Heart right ventricle (tissue), 16 donors: ENCODE measurements at regions of chr2 and their contacts with region 1.

Region 1: DNA sequence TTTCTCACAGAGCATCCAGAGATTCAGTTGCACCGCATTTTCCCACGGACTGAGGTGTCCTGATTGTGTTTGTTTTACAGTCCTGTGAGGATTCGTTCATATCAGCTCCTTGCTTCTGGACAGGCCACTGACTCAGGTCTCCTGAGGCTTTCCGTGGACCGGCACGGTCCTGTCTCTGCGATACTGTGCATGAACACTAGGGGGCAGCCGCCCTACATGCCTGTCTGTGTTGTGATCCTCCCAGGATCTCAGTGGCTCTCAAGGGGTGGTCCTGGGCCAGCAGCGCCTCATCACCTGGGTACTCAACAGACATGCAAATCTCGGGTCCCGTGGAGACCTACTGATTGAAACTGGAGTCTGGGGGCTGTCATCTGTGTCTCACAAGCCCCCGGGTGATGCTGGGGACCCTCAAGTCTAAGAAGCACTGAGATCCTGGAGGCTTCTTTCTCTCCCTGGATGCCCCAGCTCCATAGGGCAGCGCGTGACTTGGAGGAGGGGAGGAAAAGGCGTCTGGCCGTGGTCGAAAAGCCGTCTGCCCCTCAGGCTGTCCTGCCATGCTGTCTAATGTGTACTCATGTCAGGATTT is 28.9 kb downstream of the IL1R2 start:
- DNase-seq: peak; percentile 89 to 92
- ATAC-seq: peak; percentile 91 to 97 (median 95)
- H3K4me3 ChIP-seq: no peak overlapping the region
- H3K27ac ChIP-seq: peak overlapping the region in 4 of 10 donors; percentile 53 to 79 (median 62)
- H3K4me1 ChIP-seq: peaks cover 0 to 42% (median 20%) of the 10 kb centered on the region in 9 donors
- H3K27me3 ChIP-seq: no peaks in the 10 kb centered on the region
- CTCF ChIP-seq: peak; percentile 98 to 100 (median 99)

Region 2: GRCh38 chr2:102050854-102051391 is 30.2 kb after region 1 on chr2:
- intact Hi-C with region 1: loop called in 2 of 10 experiments (anchors 1 to 2 kb)
- DNase-seq: peak; percentile 83 to 93
- ATAC-seq: peak; percentile 83 to 91 (median 86)
- H3K4me3 ChIP-seq: no peak overlapping the region
- H3K27ac ChIP-seq: peak overlapping the region; percentile 38 to 89 (median 67)
- H3K4me1 ChIP-seq: peaks cover 6 to 72% (median 43%) of the 10 kb centered on the region in 9 donors
- H3K27me3 ChIP-seq: peaks cover 0 to 11% (median 0%) of the 10 kb centered on the region in 7 donors
- CTCF ChIP-seq: no peak

Region 3: GRCh38 chr2:102063941-102064678 is 43.4 kb after region 1 on chr2:
- intact Hi-C with region 1: loop called in 3 of 10 experiments (anchors 5 kb)
- DNase-seq: peak; percentile 71 to 83
- ATAC-seq: peak; percentile 79 to 95 (median 90)
- H3K4me3 ChIP-seq: peak overlapping the region in 2 of 10 donors; percentile 12 to 13
- H3K27ac ChIP-seq: peak overlapping the region; percentile 85 to 96 (median 89)
- H3K4me1 ChIP-seq: peaks cover 16 to 82% (median 59%) of the 10 kb centered on the region in 9 donors
- H3K27me3 ChIP-seq: no peaks in the 10 kb centered on the region
- CTCF ChIP-seq: no peak

Region 4: DNA sequence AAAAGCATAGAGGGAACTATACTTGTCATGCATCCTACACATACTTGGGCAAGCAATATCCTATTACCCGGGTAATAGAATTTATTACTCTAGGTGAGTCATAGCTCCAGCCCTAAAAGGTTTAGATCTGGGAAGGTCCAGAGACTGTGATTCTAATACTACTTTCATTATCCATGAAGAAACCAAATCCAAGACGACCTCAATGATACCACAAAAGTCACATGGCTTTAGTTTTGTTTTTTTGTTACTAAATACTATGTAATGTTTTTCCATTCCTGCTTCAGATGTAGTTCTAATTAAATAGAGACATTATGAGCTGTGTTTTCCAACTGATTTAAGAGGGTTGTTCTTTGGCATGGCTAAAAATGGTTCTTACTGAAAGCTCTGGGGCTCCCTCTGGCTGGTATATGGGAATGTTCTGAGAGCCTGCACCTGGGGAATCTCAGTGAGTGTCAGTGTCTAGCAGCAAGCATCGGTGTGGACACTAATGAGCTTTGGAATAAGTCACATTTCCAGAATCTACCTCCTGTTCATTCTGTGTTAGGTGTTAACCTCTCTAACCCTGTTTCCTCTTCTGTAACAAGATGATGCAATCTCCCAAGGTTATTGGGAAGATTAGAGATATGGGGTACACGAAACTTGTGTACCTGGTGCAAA is 145.6 kb after region 1 on chr2:
- intact Hi-C with region 1: loop called (anchors 1 to 5 kb)
- DNase-seq: peak in 1 of 2 donors; percentile 35
- ATAC-seq: peak; percentile 73 to 95 (median 86)
- H3K4me3 ChIP-seq: no peak overlapping the region
- H3K27ac ChIP-seq: peak overlapping the region in 2 of 10 donors; percentile 5 to 15
- H3K4me1 ChIP-seq: peaks cover 0 to 14% (median 6%) of the 10 kb centered on the region in 9 donors
- H3K27me3 ChIP-seq: no peaks in the 10 kb centered on the region
- CTCF ChIP-seq: peak; percentile 41 to 83 (median 66)

Region 5: GRCh38 chr2:102240640-102241370 is 220.1 kb after region 1 on chr2:
- intact Hi-C with region 1: loop called (anchors 1 to 5 kb)
- DNase-seq: peak; percentile 93
- ATAC-seq: peak; percentile 93 to 97 (median 94)
- H3K4me3 ChIP-seq: peak overlapping the region in 5 of 10 donors; percentile 15 to 35 (median 19)
- H3K27ac ChIP-seq: peak overlapping the region; percentile 59 to 91 (median 78)
- H3K4me1 ChIP-seq: peaks cover 0 to 41% (median 20%) of the 10 kb centered on the region in 9 donors
- H3K27me3 ChIP-seq: peaks cover 0 to 17% (median 0%) of the 10 kb centered on the region in 7 donors
- CTCF ChIP-seq: peak; percentile 96 to 100 (median 99)

Region 6: DNA sequence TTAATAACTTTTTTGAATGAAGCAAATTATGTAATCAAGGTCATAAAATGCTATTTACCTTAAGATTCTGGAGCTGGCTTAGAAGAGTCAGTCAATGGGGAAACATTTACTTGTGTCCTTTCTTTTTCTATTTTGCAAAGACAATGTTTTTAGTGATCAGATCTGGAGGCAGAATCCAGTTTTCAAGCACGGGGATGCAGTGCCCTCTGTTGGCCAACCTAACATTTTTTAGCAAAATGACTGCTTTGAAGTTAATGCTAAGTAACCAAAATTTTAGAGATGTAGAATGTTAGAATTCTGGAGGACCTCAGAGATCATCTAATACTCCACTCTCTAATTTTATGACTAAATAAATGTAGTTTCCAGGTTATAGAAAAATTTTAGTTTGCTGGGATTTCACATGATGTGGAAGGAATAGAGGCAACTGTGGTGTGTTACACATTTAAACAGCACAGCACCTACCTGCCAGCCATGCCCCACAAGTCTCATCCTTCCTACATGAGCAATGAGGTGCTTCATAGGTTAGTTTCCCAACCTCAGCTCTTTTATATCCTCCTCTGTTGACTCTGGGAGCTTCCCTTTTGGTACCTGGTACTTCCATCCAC is 428.8 kb after region 1 on chr2:
- intact Hi-C with region 1: loop called in 3 of 10 experiments (anchors 5 to 10 kb)
- DNase-seq: peak; percentile 13 to 17
- ATAC-seq: no peak
- H3K4me3 ChIP-seq: no peak overlapping the region
- H3K27ac ChIP-seq: no peak overlapping the region
- H3K4me1 ChIP-seq: no peaks in the 10 kb centered on the region
- H3K27me3 ChIP-seq: no peaks in the 10 kb centered on the region
- CTCF ChIP-seq: peak in 8 of 9 donors; percentile 27 to 77 (median 68)

Region 7: DNA sequence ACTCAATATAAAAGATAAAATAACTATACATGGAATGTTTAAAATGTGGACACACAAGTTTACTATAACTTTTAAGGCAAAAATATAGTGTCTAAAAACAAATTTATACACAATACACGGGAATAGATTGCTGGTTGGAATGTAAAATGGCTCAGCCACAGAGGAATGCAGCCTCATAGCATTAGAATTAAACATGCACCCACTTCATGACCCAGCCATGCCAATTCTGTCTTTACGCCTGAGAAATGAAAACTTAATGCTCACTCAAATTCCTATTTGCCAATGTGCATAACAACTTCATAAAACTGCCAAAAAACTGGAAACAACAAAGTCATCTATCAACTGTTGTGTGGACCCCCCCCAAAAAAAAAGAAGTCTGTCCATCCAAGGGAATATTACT is 1826.6 kb after region 1 on chr2:
- intact Hi-C with region 1: loop called in 1 of 10 experiments (anchors 10 kb)
- DNase-seq: no peak
- ATAC-seq: no peak
- H3K4me3 ChIP-seq: no peak overlapping the region
- H3K27ac ChIP-seq: no peak overlapping the region
- H3K4me1 ChIP-seq: no peaks in the 10 kb centered on the region
- H3K27me3 ChIP-seq: no peaks in the 10 kb centered on the region
- CTCF ChIP-seq: no peak